Activated CD4-positive, alpha-beta memory T cell treated with anti-CD3 and anti-CD28 coated beads for 36 hours (primary cell): ENCODE measurements at regions of chr7 and their contacts with region 1.

Region 1: DNA sequence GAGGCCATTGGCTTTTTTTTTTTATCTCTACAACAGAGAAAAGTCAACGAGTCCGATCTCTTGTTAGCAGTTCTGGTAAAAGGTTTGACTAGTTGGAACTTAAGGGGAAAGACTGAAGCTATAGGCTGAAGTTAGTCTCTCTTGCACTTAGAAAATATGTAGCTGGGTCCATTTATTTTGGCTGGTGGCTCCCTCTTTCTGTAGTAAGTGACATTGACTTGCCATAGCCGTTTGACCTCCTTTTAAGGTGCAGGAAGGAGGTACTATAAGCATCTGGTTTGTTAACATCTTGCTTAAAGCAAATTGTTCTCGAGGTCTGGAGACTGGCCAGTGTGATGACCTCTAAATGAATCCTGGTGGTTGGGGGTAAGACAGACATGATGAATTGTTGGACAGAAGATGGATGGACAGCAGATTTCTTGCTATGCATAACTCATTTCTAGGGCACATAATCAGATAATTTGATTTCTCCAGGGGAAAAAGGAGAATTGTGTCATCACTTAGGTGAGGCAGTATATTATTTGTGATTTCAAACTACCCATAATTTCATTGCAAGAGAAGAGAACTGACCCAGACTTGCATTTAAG is 356.3 kb upstream of the GALNT17 start:
- DNase-seq: no peak
- H3K4me3 Mint-ChIP-seq: no peak overlapping the region
- H3K27ac Mint-ChIP-seq: peak overlapping the region; percentile 2
- H3K4me1 Mint-ChIP-seq: peaks cover 48% of the 10 kb centered on the region
- H3K27me3 Mint-ChIP-seq: no peaks in the 10 kb centered on the region

Region 2: GRCh38 chr7:70719125-70719524 is 56.5 kb before region 1 on chr7:
- CTCF ChIA-PET with region 1: interaction called, 4 read pairs
- POLR2A ChIA-PET with region 1: no interaction called
- intact Hi-C with region 1: loop called (anchors 5 kb)
- DNase-seq: no peak
- H3K4me3 Mint-ChIP-seq: no peak overlapping the region
- H3K27ac Mint-ChIP-seq: no peak overlapping the region
- H3K4me1 Mint-ChIP-seq: peaks cover 16% of the 10 kb centered on the region
- H3K27me3 Mint-ChIP-seq: no peaks in the 10 kb centered on the region